ENCODE measurements at regions of chr13 and their contacts with region 1.

Region 1: GRCh38 chr13:27362064-27362883 is 62.1 kb upstream of the GTF3A start:
- DNase-seq: peak; percentile 88
- ATAC-seq: peak; percentile 86
- H3K4me3 ChIP-seq: peak overlapping the region; percentile 66
- H3K27ac ChIP-seq: no peak overlapping the region
- H3K4me1 ChIP-seq: peaks cover 7% of the 10 kb centered on the region
- H3K27me3 ChIP-seq: no peaks in the 10 kb centered on the region
- CTCF ChIP-seq: peak; percentile 82

Region 2: DNA sequence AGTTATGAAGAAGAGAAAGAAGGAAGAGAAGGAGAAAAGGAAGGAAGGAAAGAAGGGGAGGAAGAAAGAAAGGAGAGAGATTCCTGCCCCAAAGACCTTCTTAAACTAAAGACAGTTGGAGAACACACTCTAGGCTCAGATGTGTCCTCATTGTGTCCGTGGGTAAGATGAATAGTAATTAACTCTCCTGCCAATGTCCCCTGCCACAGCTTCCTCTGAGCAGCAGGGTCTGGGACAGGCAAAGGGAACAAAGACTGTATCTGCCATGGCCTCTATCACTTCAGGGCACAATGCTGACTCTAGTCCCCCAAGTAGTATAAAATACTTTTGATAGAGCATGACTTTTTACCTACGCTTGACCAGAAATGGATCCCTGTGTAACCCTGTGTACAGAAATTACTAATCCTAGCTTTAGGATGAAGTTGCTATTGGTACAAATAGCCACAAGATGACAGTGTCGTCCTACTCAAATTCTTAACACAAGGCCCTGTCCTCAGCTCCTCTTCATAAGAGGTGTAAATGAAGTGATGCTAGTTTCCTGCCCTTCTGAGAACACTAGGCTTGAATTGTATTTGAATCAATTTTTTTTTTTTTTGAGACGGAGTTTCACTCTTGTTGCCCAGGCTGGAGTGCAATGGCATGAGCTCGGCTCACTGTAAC is 415.5 kb before region 1 on chr13:
- CTCF ChIA-PET with region 1: interaction called, 13 read pairs
- POLR2A ChIA-PET with region 1: no interaction called
- intact Hi-C with region 1: loop called (anchors 1 kb)
- DNase-seq: peak; percentile 70
- ATAC-seq: peak; percentile 96
- H3K4me3 ChIP-seq: no peak overlapping the region
- H3K27ac ChIP-seq: no peak overlapping the region
- H3K4me1 ChIP-seq: peaks cover 4% of the 10 kb centered on the region; the same call in 1 of the 2 replicates
- H3K27me3 ChIP-seq: no peaks in the 10 kb centered on the region
- CTCF ChIP-seq: peak; percentile 81

Region 3: DNA sequence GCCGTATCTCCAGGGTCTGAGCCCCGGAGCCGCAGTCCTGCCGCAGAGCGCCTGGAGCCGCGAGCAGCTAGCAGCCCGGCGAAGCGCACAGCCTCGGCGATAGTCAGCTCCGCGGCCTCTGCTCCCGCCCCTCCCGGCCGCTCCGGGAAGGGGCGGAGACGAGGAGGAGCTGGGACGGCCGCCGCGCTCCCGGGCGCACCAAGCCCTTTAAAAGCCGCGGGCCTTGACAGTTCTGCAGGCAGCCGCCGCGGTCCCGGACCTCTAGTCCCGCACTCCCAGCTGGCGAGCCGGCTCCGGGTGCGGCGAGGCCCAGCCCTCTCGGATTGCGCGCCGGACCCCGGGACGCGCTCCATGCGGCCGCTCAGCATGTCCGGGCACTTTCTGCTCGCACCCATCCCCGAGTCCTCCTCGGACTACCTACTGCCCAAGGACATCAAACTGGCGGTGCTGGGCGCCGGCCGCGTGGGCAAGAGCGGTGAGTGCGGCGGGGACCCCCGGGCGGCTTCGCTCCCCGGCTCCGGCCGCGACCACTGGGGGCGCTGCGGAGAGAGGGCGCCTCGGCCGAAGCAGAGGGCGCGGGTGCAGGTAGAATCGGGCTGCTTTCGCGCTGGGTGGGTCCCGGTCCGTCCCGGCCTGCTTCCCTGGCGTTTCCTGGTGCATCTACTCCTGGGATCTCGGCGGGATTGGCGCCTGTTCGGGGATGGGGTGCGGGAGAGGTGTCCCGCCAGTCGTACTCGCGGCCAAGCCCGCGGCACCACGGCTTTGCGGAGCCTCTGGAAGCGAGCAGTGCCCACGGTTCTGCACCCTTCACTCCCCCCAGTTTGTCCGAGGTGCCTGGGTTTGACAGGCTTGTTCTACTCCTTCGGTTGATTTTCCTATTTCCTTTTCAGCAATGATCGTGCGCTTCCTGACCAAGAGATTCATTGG is 91.4 kb before region 1 on chr13 and contains the start of gene RASL11A:
- CTCF ChIA-PET with region 1: no interaction called
- POLR2A ChIA-PET with region 1: no interaction called
- intact Hi-C with region 1: loop called (anchors 5 kb)
- DNase-seq: peak; percentile 87
- ATAC-seq: peak; percentile 87
- H3K4me3 ChIP-seq: peak within 1 kb of the TSS; percentile 99
- H3K27ac ChIP-seq: peak within 1 kb of the TSS; percentile 26
- H3K4me1 ChIP-seq: peaks cover 18% of the 10 kb centered on the region
- H3K27me3 ChIP-seq: no peaks in the 10 kb centered on the region
- CTCF ChIP-seq: peak; percentile 82
- total RNA-seq, gene RASL11A: 43.3 and 59.7 TPM in 2 replicates

Region 4: DNA sequence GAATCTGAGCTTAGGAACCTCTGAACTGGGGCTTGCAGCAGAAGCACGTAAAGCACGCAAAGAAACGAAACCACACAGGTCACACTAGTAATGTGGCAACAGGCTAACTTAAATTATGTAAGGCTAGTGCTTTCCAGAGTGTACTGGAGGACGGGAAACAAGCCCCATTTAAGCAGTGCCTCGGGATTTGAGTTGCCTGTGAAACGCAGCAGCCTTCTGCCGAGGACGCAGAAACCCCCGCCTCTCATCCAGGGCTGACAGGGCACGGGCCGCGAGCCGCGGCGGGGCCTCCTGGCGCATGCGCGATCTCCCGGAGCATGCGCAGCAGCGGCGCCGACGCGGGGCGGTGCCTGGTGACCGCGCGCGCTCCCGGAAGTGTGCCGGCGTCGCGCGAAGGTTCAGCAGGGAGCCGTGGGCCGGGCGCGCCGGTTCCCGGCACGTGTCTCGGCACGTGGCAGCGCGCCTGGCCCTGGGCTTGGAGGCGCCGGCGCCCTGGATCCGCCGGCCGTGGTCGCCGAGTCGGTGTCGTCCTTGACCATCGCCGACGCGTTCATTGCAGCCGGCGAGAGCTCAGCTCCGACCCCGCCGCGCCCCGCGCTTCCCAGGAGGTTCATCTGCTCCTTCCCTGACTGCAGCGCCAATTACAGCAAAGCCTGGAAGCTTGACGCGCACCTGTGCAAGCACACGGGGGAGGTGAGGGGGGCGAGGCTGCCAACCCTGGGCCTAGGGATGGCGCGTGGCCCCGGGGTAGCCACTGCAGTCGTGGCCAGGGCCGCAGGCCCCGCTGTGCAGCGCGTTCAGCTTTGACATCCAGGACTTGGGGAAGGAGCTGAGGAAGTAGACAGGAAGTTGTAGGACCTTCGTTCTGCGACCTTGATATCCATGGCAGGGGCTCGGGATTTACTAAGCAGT is 62.2 kb after region 1 on chr13 and contains the start of gene GTF3A:
- CTCF ChIA-PET with region 1: interaction called, 14 read pairs
- POLR2A ChIA-PET with region 1: no interaction called
- intact Hi-C with region 1: no loop called
- DNase-seq: peak; percentile 88
- ATAC-seq: peak; percentile 55
- H3K4me3 ChIP-seq: peak within 1 kb of the TSS; percentile 69
- H3K27ac ChIP-seq: peak within 1 kb of the TSS; percentile 78
- H3K4me1 ChIP-seq: peaks cover 37% of the 10 kb centered on the region
- H3K27me3 ChIP-seq: no peaks in the 10 kb centered on the region
- CTCF ChIP-seq: no peak
- total RNA-seq, gene GTF3A: 174 and 201 TPM in 2 replicates

Region 5: DNA sequence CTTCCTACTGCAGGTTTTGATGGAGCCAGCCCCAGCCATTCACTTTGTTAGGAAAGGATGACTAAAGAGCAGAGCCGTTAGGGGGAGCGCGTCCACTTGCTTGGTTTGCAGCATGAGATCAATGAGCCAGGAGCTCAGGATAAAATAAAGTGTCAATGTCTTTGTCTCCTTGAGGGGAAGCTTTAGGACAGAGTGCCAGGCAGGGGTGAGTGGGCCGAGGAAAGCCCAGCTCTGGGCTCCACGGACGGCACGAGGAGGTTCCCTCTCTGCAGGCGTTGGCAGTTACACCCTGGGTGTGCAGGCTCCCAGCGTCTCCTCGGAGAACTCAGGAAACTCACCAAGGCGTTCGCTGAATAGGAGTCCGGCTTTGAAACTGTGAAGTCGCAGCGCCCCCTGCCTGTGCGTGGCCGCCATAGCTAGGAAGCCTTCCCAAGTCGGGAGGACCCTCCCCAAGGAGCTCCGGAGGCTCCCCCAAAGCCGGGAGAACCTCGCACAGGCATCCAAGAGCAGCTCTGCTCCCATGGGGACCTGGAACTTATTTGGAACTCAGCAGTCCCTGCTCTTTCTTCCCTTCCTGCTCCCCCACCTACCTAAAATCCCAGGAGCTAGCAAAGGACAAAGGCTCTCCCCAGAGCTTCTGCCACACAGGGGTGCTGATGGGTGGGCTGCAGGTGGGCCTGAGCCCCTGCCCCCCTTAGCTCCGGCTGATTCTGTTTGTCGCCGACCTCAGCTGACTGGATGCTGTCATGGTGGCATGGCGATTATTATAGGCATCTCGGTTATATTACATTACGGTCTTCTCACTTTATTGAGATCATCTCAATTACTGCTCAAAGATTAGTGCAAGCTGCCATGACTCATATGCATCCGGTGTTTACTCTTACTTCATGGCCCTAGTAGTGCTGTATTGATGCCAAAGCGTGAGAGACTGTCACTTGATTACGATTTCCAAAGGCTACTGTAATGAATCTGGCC is 464.4 kb after region 1 on chr13:
- CTCF ChIA-PET with region 1: interaction called, 12 read pairs
- POLR2A ChIA-PET with region 1: no interaction called
- intact Hi-C with region 1: loop called (anchors 1 kb)
- DNase-seq: peak; percentile 85
- ATAC-seq: peak; percentile 86
- H3K4me3 ChIP-seq: peak overlapping the region; percentile 67
- H3K27ac ChIP-seq: no peak overlapping the region
- H3K4me1 ChIP-seq: peaks cover 8% of the 10 kb centered on the region
- H3K27me3 ChIP-seq: peaks cover 37% of the 10 kb centered on the region
- CTCF ChIP-seq: peak; percentile 91

Region 6: DNA sequence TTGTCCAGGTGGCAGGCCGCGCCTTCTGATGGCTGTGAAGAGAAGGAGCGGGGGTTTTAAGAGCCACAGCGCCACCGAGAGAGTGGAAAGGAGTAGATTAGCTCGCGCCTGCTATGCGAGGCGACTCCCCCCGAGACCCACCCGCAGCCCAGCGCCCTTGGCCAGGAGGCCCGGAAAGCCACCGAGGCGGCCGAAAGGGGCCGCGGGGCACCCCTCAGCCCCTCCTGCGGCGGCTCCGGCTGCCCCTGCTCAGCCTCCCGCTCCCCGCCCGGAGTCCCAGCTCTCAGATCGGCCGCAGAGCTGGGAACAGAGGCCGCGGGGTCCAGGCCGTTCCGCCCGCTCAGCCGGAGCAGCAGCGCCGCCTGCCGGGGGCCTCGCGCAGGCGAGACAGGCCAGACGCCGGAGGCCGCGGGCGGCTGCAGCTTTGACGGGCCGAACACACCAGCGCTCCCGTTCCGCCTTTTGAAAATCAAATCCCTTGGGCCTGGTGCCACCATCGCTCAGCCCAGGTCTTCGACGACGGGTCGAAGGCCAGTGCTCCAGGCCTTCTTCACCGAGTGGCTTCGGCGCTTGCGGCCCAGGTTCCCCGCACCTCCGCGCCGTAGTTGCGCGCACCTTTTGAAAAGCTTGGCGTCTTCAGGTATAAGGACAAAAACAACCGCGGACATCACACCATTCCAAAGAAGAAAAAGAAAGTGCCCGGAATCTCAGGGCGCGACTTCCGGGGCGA is 591.6 kb after region 1 on chr13:
- CTCF ChIA-PET with region 1: interaction called, 10 read pairs
- POLR2A ChIA-PET with region 1: no interaction called
- intact Hi-C with region 1: no loop called
- DNase-seq: peak; percentile 79
- ATAC-seq: peak; percentile 97
- H3K4me3 ChIP-seq: peak overlapping the region; percentile 74
- H3K27ac ChIP-seq: peak overlapping the region; percentile 38
- H3K4me1 ChIP-seq: peaks cover 19% of the 10 kb centered on the region
- H3K27me3 ChIP-seq: no peaks in the 10 kb centered on the region
- CTCF ChIP-seq: peak; percentile 74

Measured in PC-3 (cell line).